CD14-positive monocyte (primary cell): ENCODE measurements at regions of chr1 and their contacts with region 1.

Region 1: GRCh38 chr1:53945433-53946251 is at the start of gene IFT25:
- DNase-seq: peak; percentile 93 to 97 (median 97)
- H3K4me3 ChIP-seq: peak within 1 kb of the TSS; percentile 64 to 96 (median 82)
- H3K4me3 Mint-ChIP-seq: peak within 1 kb of the TSS; percentile 94 to 96
- H3K27ac ChIP-seq: peak within 1 kb of the TSS; percentile 51 to 78
- H3K27ac Mint-ChIP-seq: peak within 1 kb of the TSS; percentile 87 to 94 (median 92)
- H3K4me1 ChIP-seq: peaks cover 18 to 22% of the 10 kb centered on the region in 2 donors
- H3K4me1 Mint-ChIP-seq: peaks cover 22% of the 10 kb centered on the region
- H3K27me3 ChIP-seq: no peaks in the 10 kb centered on the region
- H3K27me3 Mint-ChIP-seq: no peaks in the 10 kb centered on the region
- CTCF ChIP-seq: no peak
- polyA plus RNA-seq, gene IFT25: 17.1 to 30.6 (median 27.8) TPM

Region 2: GRCh38 chr1:53837924-53838652 is 107.6 kb before region 1 on chr1 and contains the start of gene NDC1:
- intact Hi-C with region 1: loop called in 1 of 2 experiments (anchors 5 kb)
- DNase-seq: peak; percentile 86 to 89 (median 88)
- H3K4me3 ChIP-seq: peak within 1 kb of the TSS; percentile 83 to 93 (median 86)
- H3K4me3 Mint-ChIP-seq: peak within 1 kb of the TSS; percentile 93 to 98
- H3K27ac ChIP-seq: peak within 1 kb of the TSS; percentile 87 to 89
- H3K27ac Mint-ChIP-seq: peak within 1 kb of the TSS; percentile 94 to 99 (median 97)
- H3K4me1 ChIP-seq: peaks cover 8 to 16% of the 10 kb centered on the region in 2 donors
- H3K4me1 Mint-ChIP-seq: peaks cover 22% of the 10 kb centered on the region
- H3K27me3 ChIP-seq: no peaks in the 10 kb centered on the region
- H3K27me3 Mint-ChIP-seq: peaks cover 1 to 4% (median 2%) of the 10 kb centered on the region in 3 donors
- CTCF ChIP-seq: peak; percentile 5
- polyA plus RNA-seq, gene NDC1: 3.0 to 6.1 (median 4.7) TPM

Region 3: DNA sequence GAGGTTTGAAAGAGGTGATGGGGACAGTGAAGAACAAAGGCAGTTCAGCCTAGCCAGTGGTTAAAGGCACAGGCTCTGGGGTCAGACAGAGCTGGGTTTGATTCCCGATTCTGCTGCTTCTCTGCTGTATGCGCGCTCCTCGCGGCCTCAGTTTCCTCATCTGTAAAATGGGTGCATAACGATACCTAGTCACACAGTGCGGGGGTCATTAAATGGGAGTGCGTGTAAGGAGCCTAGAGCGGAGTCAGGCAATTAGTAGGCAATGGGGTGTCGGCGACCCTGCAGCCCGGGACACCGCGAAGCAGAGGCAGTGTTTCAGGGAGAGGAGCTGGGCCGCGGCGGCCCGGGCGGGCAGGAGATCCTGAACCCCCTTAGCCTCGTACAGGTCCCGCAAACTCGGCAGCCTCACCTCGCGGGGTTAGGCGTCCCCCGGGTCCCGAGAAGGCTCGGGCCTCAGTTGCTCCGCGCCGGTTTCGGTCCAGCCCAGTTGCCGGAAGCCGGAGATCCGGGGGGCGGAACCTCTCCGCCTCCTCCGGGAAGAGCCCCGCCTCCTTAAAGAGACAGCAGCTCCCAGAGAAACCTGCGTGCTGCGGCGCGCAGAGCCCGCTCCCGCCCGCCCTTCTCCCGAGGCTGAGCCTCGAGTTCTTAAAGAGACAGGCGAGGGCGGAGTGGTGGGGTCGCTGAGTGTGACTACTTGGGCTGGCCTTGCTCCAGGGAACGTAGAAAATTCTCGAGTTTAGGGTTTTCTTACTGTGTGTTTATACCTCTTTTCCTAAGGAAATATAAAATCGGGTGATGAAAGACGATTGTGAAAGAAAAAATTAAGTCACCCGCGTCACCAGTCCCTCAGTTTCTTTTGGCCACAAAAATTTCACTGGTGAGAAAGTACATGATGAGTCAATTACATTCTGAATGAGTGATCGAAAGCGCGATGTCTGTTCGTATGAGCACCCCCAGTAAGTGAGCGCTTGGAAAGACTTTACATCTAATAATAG is 56.0 kb before region 1 on chr1 and contains the start of gene YIPF1:
- intact Hi-C with region 1: loop called (anchors 2 to 5 kb)
- DNase-seq: peak; percentile 68 to 92 (median 81)
- H3K4me3 ChIP-seq: peak within 1 kb of the TSS; percentile 68 to 88 (median 82)
- H3K4me3 Mint-ChIP-seq: peak within 1 kb of the TSS; percentile 94 to 96
- H3K27ac ChIP-seq: peak within 1 kb of the TSS; percentile 72 to 83
- H3K27ac Mint-ChIP-seq: peak within 1 kb of the TSS; percentile 89 to 97 (median 96)
- H3K4me1 ChIP-seq: peaks cover 29 to 43% of the 10 kb centered on the region in 2 donors
- H3K4me1 Mint-ChIP-seq: peaks cover 48% of the 10 kb centered on the region
- H3K27me3 ChIP-seq: no peaks in the 10 kb centered on the region
- H3K27me3 Mint-ChIP-seq: peaks cover 0 to 2% (median 2%) of the 10 kb centered on the region in 3 donors
- CTCF ChIP-seq: no peak
- polyA plus RNA-seq, gene YIPF1: 24.4 to 51.9 (median 42.1) TPM

Region 4: GRCh38 chr1:54001591-54001990 is 55.9 kb after region 1 on chr1:
- intact Hi-C with region 1: no loop called
- DNase-seq: no peak
- H3K4me3 ChIP-seq: no peak overlapping the region
- H3K4me3 Mint-ChIP-seq: no peak overlapping the region
- H3K27ac ChIP-seq: no peak overlapping the region
- H3K27ac Mint-ChIP-seq: no peak overlapping the region
- H3K4me1 ChIP-seq: no peaks in the 10 kb centered on the region
- H3K4me1 Mint-ChIP-seq: no peaks in the 10 kb centered on the region
- H3K27me3 ChIP-seq: no peaks in the 10 kb centered on the region
- H3K27me3 Mint-ChIP-seq: peaks cover 0 to 4% (median 3%) of the 10 kb centered on the region in 3 donors
- CTCF ChIP-seq: no peak

Region 5: DNA sequence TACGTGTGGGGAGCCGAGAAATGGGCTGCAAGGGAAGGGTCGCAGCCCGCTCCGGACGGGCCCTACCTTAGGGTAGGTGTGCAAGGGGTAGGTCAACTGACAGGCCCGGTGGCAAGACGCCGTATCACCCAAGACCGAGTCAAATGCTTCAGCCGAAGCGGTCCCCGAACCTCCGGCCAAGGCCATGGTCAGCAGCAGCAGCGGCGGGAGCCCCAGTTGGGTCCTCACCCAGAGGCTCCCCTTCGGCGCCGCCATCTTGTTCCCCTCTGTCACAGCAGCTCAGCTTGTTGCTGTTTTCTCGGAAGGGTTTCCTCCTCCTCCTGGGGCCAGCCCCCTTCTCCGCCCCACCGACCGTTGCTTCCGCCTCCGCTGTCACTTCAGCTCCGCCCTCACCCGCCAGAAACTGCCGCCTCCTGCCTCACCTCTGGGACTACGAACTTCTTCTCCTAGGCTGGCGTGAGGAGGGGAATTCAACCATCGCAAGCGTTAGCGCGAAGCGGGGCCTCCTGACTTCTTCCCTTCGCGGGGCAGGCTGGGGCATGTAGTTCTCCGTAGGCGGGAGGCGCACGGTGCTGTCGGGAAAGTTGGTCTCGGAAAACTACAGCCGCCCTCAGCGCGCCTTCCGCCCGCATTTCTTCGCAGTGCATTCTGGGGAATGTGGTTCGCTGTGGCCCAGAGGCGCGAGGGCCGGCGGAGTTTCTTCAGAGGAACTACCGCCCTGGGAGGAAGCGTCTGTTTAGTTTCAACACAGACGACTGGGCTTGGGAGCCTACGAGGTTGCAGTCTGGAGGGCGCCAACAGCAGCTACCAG is 107.5 kb after region 1 on chr1 and contains the starts of genes TCEANC2 and TMEM59:
- intact Hi-C with region 1: loop called (anchors 5 kb)
- DNase-seq: peak; percentile 98 to 99 (median 99)
- H3K4me3 ChIP-seq: peak within 1 kb of the TSS; percentile 90 to 99 (median 93)
- H3K4me3 Mint-ChIP-seq: no peak within 1 kb of the TSS
- H3K27ac ChIP-seq: peak within 1 kb of the TSS; percentile 89 to 97
- H3K27ac Mint-ChIP-seq: peak within 1 kb of the TSS in 1 of 7 donors; percentile 69
- H3K4me1 ChIP-seq: peaks cover 22 to 38% of the 10 kb centered on the region in 2 donors
- H3K4me1 Mint-ChIP-seq: peaks cover 27% of the 10 kb centered on the region
- H3K27me3 ChIP-seq: no peaks in the 10 kb centered on the region
- H3K27me3 Mint-ChIP-seq: no peaks in the 10 kb centered on the region
- CTCF ChIP-seq: no peak
- polyA plus RNA-seq, gene TCEANC2: 3.0 to 6.7 (median 3.8) TPM
- polyA plus RNA-seq, gene TMEM59: 169 to 925 (median 831) TPM

Region 6: DNA sequence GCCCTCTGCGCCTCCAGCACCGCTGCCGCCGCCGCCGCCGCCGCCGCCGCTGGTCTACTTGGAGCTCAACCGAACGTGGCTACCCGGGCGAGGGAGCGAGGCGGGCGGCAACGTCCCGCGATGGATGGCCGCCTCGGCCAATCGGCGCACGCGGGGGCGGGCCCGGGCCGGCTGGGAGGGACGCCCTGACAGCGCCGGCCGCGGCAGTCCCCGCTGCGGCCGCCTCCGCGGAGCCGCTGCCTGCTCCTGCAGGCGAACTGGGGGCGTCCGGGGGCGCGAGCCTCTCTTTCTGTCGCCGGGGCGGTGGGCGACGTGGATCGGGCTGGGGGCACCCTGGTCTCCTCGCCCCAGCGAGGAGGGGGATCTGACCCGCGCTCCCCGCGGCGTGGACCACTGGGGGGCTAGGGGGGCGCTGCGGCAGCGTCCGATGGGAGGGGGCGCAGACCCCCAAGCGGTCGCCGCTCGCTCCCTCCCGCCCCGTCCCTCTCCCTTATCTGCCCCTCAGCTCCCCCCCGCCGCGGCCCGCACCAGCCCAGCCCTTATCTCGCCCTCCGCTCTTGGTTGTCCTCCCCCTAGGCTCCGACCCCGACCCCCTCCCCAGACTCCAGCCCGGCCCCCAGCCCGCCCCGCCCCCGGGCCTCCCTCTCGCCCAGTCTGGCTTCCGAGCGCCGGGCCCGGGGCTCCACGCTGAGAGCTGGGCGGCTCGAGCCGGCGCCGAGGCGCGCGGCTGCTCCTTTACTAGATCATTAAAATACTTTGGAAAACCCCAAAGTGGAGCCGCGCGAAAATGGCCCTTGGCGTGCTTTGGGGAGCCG is 460.9 kb after region 1 on chr1 and contains the start of gene SSBP3:
- intact Hi-C with region 1: loop called in 1 of 2 experiments (anchors 5 kb)
- DNase-seq: peak; percentile 83 to 88 (median 85)
- H3K4me3 ChIP-seq: peak within 1 kb of the TSS; percentile 61 to 97 (median 96)
- H3K4me3 Mint-ChIP-seq: peak within 1 kb of the TSS; percentile 86 to 92
- H3K27ac ChIP-seq: peak within 1 kb of the TSS; percentile 57 to 92
- H3K27ac Mint-ChIP-seq: peak within 1 kb of the TSS; percentile 87 to 93 (median 90)
- H3K4me1 ChIP-seq: peaks cover 32 to 54% of the 10 kb centered on the region in 2 donors
- H3K4me1 Mint-ChIP-seq: peaks cover 51% of the 10 kb centered on the region
- H3K27me3 ChIP-seq: peaks cover 0 to 8% of the 10 kb centered on the region in 2 donors
- H3K27me3 Mint-ChIP-seq: peaks cover 8 to 13% (median 11%) of the 10 kb centered on the region in 3 donors
- CTCF ChIP-seq: peak; percentile 7
- polyA plus RNA-seq, gene SSBP3: 4.1 to 30.7 (median 4.3) TPM

Region 7: GRCh38 chr1:54715493-54716298 is 770.1 kb after region 1 on chr1 and contains the start of gene TTC4:
- intact Hi-C with region 1: loop called in 1 of 2 experiments (anchors 10 kb)
- DNase-seq: peak; percentile 74 to 78 (median 76)
- H3K4me3 ChIP-seq: peak within 1 kb of the TSS; percentile 72 to 92 (median 74)
- H3K4me3 Mint-ChIP-seq: peak within 1 kb of the TSS; percentile 91 to 94
- H3K27ac ChIP-seq: peak within 1 kb of the TSS; percentile 46 to 87
- H3K27ac Mint-ChIP-seq: peak within 1 kb of the TSS; percentile 86 to 96 (median 92)
- H3K4me1 ChIP-seq: peaks cover 15 to 18% of the 10 kb centered on the region in 2 donors
- H3K4me1 Mint-ChIP-seq: peaks cover 19% of the 10 kb centered on the region
- H3K27me3 ChIP-seq: no peaks in the 10 kb centered on the region
- H3K27me3 Mint-ChIP-seq: peaks cover 0 to 2% (median 2%) of the 10 kb centered on the region in 3 donors
- CTCF ChIP-seq: no peak
- polyA plus RNA-seq, gene TTC4: 9.2 to 13.3 (median 12.4) TPM

Region 8: GRCh38 chr1:54764133-54764921 is 818.7 kb after region 1 on chr1 and contains the start of gene PARS2:
- intact Hi-C with region 1: loop called in 1 of 2 experiments (anchors 10 kb)
- DNase-seq: peak; percentile 99
- H3K4me3 ChIP-seq: peak within 1 kb of the TSS; percentile 90 to 96 (median 91)
- H3K4me3 Mint-ChIP-seq: peak within 1 kb of the TSS; percentile 90 to 96
- H3K27ac ChIP-seq: peak within 1 kb of the TSS in 1 of 2 donors; percentile 88
- H3K27ac Mint-ChIP-seq: peak within 1 kb of the TSS; percentile 80 to 94 (median 90)
- H3K4me1 ChIP-seq: peaks cover 10 to 17% of the 10 kb centered on the region in 2 donors
- H3K4me1 Mint-ChIP-seq: peaks cover 19% of the 10 kb centered on the region
- H3K27me3 ChIP-seq: no peaks in the 10 kb centered on the region
- H3K27me3 Mint-ChIP-seq: peaks cover 0 to 1% (median 0%) of the 10 kb centered on the region in 3 donors
- CTCF ChIP-seq: no peak
- polyA plus RNA-seq, gene PARS2: 0.73 to 1.2 (median 0.92) TPM